ENCODE measurements at regions of chr7 and their contacts with region 1.

Region 1: DNA sequence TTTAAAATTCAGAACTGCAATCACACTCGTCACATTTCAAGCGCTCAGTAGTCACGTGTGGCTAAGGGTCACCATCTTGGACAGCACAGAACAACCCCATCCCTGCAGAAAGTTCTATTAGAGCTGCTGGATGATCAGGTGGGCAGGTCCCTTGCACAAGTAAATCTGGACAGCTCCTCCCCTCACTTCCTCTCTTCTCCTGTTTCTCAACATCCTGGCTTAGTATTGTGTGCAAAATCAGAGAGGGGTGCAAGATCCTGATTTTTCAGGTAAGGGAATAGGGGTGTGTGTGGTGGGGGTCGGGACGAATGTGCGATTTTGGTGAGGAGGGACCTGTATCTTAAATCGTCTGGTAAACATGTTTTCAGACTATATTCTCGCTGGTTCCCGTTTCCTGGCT is at the start of gene GIMAP4:
- DNase-seq: peak in 5 of 9 experiments; percentile 33 to 71 (median 50)
- ATAC-seq: peak; percentile 28
- H3K4me3 ChIP-seq: peak within 1 kb of the TSS; percentile 83 to 88
- H3K4me3 Mint-ChIP-seq: peak within 1 kb of the TSS; percentile 97
- H3K27ac ChIP-seq: peak within 1 kb of the TSS; percentile 73 to 74
- H3K27ac Mint-ChIP-seq: peak within 1 kb of the TSS; percentile 98
- H3K4me1 ChIP-seq: peaks cover 73% of the 10 kb centered on the region
- H3K4me1 Mint-ChIP-seq: peaks cover 78% of the 10 kb centered on the region
- H3K27me3 ChIP-seq: no peaks in the 10 kb centered on the region
- H3K27me3 Mint-ChIP-seq: no peaks in the 10 kb centered on the region
- CTCF ChIP-seq: no peak
- total RNA-seq, gene GIMAP4: 11.8 to 13.8 TPM

Region 2: DNA sequence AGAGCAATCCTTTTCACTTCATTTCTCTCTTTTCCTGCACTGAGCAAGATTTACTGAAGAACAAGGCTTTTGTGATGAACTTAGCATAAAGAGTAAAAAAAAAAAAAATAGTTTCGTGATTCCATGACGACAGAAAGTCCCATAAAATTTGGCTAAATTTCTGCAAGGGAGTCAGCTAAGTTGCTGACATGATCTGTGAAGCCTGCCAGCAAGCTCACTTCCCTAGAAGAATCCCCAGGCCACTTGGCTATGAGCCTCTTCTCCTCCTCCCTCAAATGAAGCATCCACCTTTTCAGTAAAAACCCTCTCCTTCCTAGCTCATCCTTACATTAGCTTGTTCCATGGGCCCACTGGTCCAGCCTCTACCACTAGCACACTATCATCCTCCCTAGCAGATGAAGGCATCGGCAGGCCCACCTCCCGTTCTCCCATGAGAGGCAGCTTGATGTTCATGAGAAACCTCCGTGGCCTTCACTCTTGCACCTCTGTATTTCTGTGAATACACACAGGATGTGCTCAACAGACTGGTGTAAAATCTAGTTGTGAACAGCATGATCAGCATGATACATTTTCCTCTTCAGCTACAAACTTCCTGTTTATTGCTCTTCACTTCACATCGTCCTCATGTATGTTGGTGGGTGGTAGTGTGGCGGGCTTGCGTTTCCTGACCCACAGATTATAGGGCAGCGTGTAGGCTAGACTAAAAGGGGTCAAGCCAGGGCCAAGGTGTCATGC is 85.8 kb before region 1 on chr7:
- CTCF ChIA-PET with region 1: interaction called, 4 read pairs
- POLR2A ChIA-PET with region 1: interaction called, 24 read pairs
- intact Hi-C with region 1: no loop called
- DNase-seq: peak; percentile 27 to 84 (median 65)
- ATAC-seq: peak; percentile 63
- H3K4me3 ChIP-seq: peak overlapping the region; percentile 1 to 14
- H3K4me3 Mint-ChIP-seq: peak overlapping the region; percentile 81
- H3K27ac ChIP-seq: peak overlapping the region; percentile 55 to 91
- H3K27ac Mint-ChIP-seq: peak overlapping the region; percentile 100
- H3K4me1 ChIP-seq: peaks cover 89% of the 10 kb centered on the region
- H3K4me1 Mint-ChIP-seq: peaks cover 91% of the 10 kb centered on the region
- H3K27me3 ChIP-seq: no peaks in the 10 kb centered on the region
- H3K27me3 Mint-ChIP-seq: no peaks in the 10 kb centered on the region
- CTCF ChIP-seq: no peak

Region 3: GRCh38 chr7:150520145-150520544 is 47.0 kb before region 1 on chr7:
- CTCF ChIA-PET with region 1: interaction called, 28 read pairs
- POLR2A ChIA-PET with region 1: interaction called, 300 read pairs
- intact Hi-C with region 1: loop called (anchors 2 to 5 kb)
- DNase-seq: peak in 6 of 9 experiments; percentile 9 to 75 (median 33)
- ATAC-seq: peak; percentile 27
- H3K4me3 ChIP-seq: peak overlapping the region; percentile 58 to 76
- H3K4me3 Mint-ChIP-seq: peak overlapping the region; percentile 100
- H3K27ac ChIP-seq: peak overlapping the region; percentile 58 to 75
- H3K27ac Mint-ChIP-seq: peak overlapping the region; percentile 91
- H3K4me1 ChIP-seq: peaks cover 12% of the 10 kb centered on the region
- H3K4me1 Mint-ChIP-seq: peaks cover 44% of the 10 kb centered on the region
- H3K27me3 ChIP-seq: no peaks in the 10 kb centered on the region
- H3K27me3 Mint-ChIP-seq: no peaks in the 10 kb centered on the region
- CTCF ChIP-seq: no peak

Region 4: GRCh38 chr7:150620617-150621371 is 53.6 kb after region 1 on chr7:
- CTCF ChIA-PET with region 1: interaction called, 10 read pairs
- POLR2A ChIA-PET with region 1: interaction called, 142 read pairs
- intact Hi-C with region 1: no loop called
- DNase-seq: no peak
- ATAC-seq: no peak
- H3K4me3 ChIP-seq: no peak overlapping the region
- H3K4me3 Mint-ChIP-seq: no peak overlapping the region
- H3K27ac ChIP-seq: peak overlapping the region in 1 of 2 experiments; percentile 21
- H3K27ac Mint-ChIP-seq: peak overlapping the region; percentile 87
- H3K4me1 ChIP-seq: peaks cover 32% of the 10 kb centered on the region
- H3K4me1 Mint-ChIP-seq: peaks cover 58% of the 10 kb centered on the region
- H3K27me3 ChIP-seq: no peaks in the 10 kb centered on the region
- H3K27me3 Mint-ChIP-seq: no peaks in the 10 kb centered on the region
- CTCF ChIP-seq: no peak

Region 5: GRCh38 chr7:150668472-150668911 is 101.3 kb after region 1 on chr7:
- CTCF ChIA-PET with region 1: interaction called, 15 read pairs
- POLR2A ChIA-PET with region 1: interaction called, 13 read pairs
- intact Hi-C with region 1: no loop called
- DNase-seq: peak in 6 of 9 experiments; percentile 60 to 94 (median 72)
- ATAC-seq: peak; percentile 76
- H3K4me3 ChIP-seq: peak overlapping the region in 1 of 2 experiments; percentile 17
- H3K4me3 Mint-ChIP-seq: peak overlapping the region; percentile 36
- H3K27ac ChIP-seq: peak overlapping the region; percentile 63 to 95
- H3K27ac Mint-ChIP-seq: peak overlapping the region; percentile 97
- H3K4me1 ChIP-seq: peaks cover 88% of the 10 kb centered on the region
- H3K4me1 Mint-ChIP-seq: peaks cover 90% of the 10 kb centered on the region
- H3K27me3 ChIP-seq: no peaks in the 10 kb centered on the region
- H3K27me3 Mint-ChIP-seq: no peaks in the 10 kb centered on the region
- CTCF ChIP-seq: no peak

Region 6: GRCh38 chr7:150685219-150686029 is 118.3 kb after region 1 on chr7 and contains the start of gene GIMAP2:
- CTCF ChIA-PET with region 1: interaction called, 9 read pairs
- POLR2A ChIA-PET with region 1: interaction called, 58 read pairs
- intact Hi-C with region 1: loop called in 1 of 2 experiments (anchors 5 kb)
- DNase-seq: peak in 3 of 9 experiments; percentile 26 to 81 (median 68)
- ATAC-seq: peak; percentile 77
- H3K4me3 ChIP-seq: peak within 1 kb of the TSS; percentile 62 to 69
- H3K4me3 Mint-ChIP-seq: peak within 1 kb of the TSS; percentile 96
- H3K27ac ChIP-seq: peak within 1 kb of the TSS; percentile 66 to 81
- H3K27ac Mint-ChIP-seq: peak within 1 kb of the TSS; percentile 99
- H3K4me1 ChIP-seq: peaks cover 54% of the 10 kb centered on the region
- H3K4me1 Mint-ChIP-seq: peaks cover 82% of the 10 kb centered on the region
- H3K27me3 ChIP-seq: no peaks in the 10 kb centered on the region
- H3K27me3 Mint-ChIP-seq: no peaks in the 10 kb centered on the region
- CTCF ChIP-seq: no peak
- total RNA-seq, gene GIMAP2: 58.4 to 58.8 TPM

Region 7: GRCh38 chr7:150753826-150754603 is 186.8 kb after region 1 on chr7:
- CTCF ChIA-PET with region 1: interaction called, 27 read pairs
- POLR2A ChIA-PET with region 1: interaction called, 37 read pairs
- intact Hi-C with region 1: loop called (anchors 1 kb)
- DNase-seq: peak in 2 of 9 experiments; percentile 57 to 73
- ATAC-seq: peak; percentile 8
- H3K4me3 ChIP-seq: no peak overlapping the region
- H3K4me3 Mint-ChIP-seq: peak overlapping the region; percentile 19
- H3K27ac ChIP-seq: peak overlapping the region in 1 of 2 experiments; percentile 83
- H3K27ac Mint-ChIP-seq: peak overlapping the region; percentile 94
- H3K4me1 ChIP-seq: peaks cover 76% of the 10 kb centered on the region
- H3K4me1 Mint-ChIP-seq: peaks cover 72% of the 10 kb centered on the region
- H3K27me3 ChIP-seq: no peaks in the 10 kb centered on the region
- H3K27me3 Mint-ChIP-seq: no peaks in the 10 kb centered on the region
- CTCF ChIP-seq: no peak

Measured in CD8-positive, alpha-beta T cell (primary cell).